MCF 10A (cell line): ENCODE measurements at regions of chr11 and their contacts with region 1.

Region 1: GRCh38 chr11:103433386-103434380 is 324.5 kb downstream of the DYNC2H1 start:
- DNase-seq: peak; percentile 80
- H3K4me3 Mint-ChIP-seq: no peak overlapping the region
- H3K27ac Mint-ChIP-seq: peak overlapping the region; percentile 29
- H3K4me1 Mint-ChIP-seq: peaks cover 8% of the 10 kb centered on the region
- H3K27me3 Mint-ChIP-seq: no peaks in the 10 kb centered on the region
- CTCF ChIP-seq: no peak

Region 2: DNA sequence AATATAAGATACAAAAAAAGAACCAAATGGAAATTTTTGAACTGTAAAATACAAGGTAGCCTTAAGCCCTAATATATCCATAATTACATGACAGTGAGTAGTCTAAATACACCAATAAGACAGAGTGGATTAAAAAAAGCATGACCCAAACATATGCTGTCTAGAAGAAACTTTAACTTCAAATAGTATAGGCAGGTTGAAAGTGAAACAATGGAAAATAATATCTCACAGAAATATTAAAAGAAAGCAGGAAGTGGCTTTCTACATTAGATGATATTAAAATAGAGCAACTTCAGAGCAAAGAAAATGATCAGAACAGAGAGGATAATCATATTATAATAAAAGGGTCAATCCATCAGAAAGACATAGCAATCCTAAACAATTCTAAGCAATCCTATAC is 363.5 kb before region 1 on chr11:
- CTCF ChIA-PET with region 1: no interaction called
- POLR2A ChIA-PET with region 1: no interaction called
- intact Hi-C with region 1: no loop called
- DNase-seq: no peak
- H3K4me3 Mint-ChIP-seq: no peak overlapping the region
- H3K27ac Mint-ChIP-seq: peak overlapping the region; percentile 37
- H3K4me1 Mint-ChIP-seq: peaks cover 27% of the 10 kb centered on the region
- H3K27me3 Mint-ChIP-seq: no peaks in the 10 kb centered on the region
- CTCF ChIP-seq: no peak

Region 3: GRCh38 chr11:103380031-103380430 is 53.7 kb before region 1 on chr11:
- CTCF ChIA-PET with region 1: no interaction called
- POLR2A ChIA-PET with region 1: no interaction called
- intact Hi-C with region 1: no loop called
- DNase-seq: no peak
- H3K4me3 Mint-ChIP-seq: no peak overlapping the region
- H3K27ac Mint-ChIP-seq: no peak overlapping the region
- H3K4me1 Mint-ChIP-seq: peaks cover 13% of the 10 kb centered on the region
- H3K27me3 Mint-ChIP-seq: no peaks in the 10 kb centered on the region
- CTCF ChIP-seq: no peak

Region 4: GRCh38 chr11:103537904-103538502 is 104.3 kb after region 1 on chr11:
- CTCF ChIA-PET with region 1: interaction called, 3 read pairs
- POLR2A ChIA-PET with region 1: no interaction called
- intact Hi-C with region 1: loop called (anchors 10 kb)
- DNase-seq: peak; percentile 59
- H3K4me3 Mint-ChIP-seq: no peak overlapping the region
- H3K27ac Mint-ChIP-seq: no peak overlapping the region
- H3K4me1 Mint-ChIP-seq: peaks cover 13% of the 10 kb centered on the region
- H3K27me3 Mint-ChIP-seq: no peaks in the 10 kb centered on the region
- CTCF ChIP-seq: peak; percentile 52